BJ (cell line): ENCODE measurements at regions of chr16 and their contacts with region 1.

Region 1: GRCh38 chr16:30786936-30787612 is at the start of gene ZNF629:
- DNase-seq: no peak
- H3K4me3 ChIP-seq: peak within 1 kb of the TSS; percentile 63
- H3K27me3 ChIP-seq: no peaks in the 10 kb centered on the region
- CTCF ChIP-seq: no peak
- polyA plus RNA-seq, gene ZNF629: 4.6 and 6.0 TPM in 2 replicates

Region 2: DNA sequence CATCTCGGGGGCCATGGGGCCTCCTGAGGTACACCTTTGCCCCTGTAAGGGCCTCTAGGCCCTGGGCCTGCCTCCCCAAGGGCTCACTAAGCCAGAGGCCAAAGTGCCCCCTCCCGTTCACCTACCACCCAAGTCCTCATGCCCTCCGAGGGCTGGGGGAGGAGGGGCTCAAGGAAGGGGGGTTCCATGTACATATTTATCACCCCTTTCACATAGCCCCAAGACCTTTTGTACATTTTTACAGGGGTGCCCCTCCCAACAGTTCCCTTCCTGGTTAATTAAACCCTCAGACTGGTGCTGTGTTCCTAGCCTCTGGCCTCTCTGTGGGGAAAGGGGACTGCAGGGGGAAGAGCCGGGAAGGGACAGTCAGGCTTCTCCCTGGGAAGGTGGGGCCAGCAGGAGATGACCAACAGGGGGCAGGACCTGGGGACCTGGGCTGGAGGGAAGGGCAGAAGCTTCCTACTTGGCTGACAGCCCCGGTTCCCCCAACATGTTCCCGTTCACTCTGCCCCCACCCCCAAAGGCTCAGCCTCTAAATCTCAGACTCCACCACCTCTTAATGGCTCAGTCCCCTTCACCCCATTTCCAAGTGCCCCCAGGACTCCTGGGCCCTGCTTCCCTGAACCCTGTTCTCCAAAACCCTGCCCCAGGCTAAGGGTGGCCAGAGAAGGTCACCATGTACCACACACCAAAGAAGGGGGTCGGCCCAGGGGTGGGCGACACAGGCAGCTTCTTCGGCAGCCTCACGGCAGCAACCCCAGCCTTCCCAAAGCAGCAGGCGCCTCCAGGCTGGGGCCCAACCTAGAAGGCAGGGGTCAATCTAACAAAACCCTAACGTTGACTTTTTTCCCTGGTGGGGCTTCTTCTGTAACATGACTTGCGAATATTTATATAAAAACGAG is 116.9 kb before region 1 on chr16:
- CTCF ChIA-PET with region 1: no interaction called
- POLR2A ChIA-PET with region 1: no interaction called
- DNase-seq: no peak
- H3K4me3 ChIP-seq: no peak overlapping the region
- H3K27me3 ChIP-seq: no peaks in the 10 kb centered on the region
- CTCF ChIP-seq: no peak

Region 3: GRCh38 chr16:30740364-30741251 is 46.5 kb before region 1 on chr16:
- CTCF ChIA-PET with region 1: no interaction called
- POLR2A ChIA-PET with region 1: no interaction called
- DNase-seq: peak; percentile 22
- H3K4me3 ChIP-seq: no peak overlapping the region
- H3K27me3 ChIP-seq: no peaks in the 10 kb centered on the region
- CTCF ChIP-seq: no peak

Region 4: DNA sequence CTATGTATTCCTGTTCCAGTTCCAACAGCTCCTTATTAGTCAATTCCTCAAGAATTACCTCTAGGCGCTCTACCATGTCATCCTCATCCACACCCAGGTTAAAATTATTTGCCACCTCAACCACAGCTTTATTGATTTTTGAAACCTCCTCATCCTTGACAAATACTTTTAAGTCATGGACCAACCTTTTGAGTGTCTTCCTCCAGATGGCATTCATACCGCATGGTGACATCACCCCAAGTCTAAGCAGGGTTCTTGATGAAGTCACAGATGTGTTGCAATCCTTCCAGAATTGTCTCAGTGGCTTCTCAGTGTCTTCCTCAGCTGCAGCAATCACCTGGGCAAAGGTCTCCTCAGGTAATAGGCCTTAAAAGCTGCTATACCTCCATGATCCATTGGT is 66.7 kb after region 1 on chr16:
- CTCF ChIA-PET with region 1: no interaction called
- POLR2A ChIA-PET with region 1: interaction called, 19 read pairs
- DNase-seq: no peak
- H3K4me3 ChIP-seq: no peak overlapping the region
- H3K27me3 ChIP-seq: no peaks in the 10 kb centered on the region
- CTCF ChIP-seq: no peak